Left cardiac atrium (tissue), 4 donors: ENCODE measurements at regions of chr11 and their contacts with region 1.

Region 1: GRCh38 chr11:65418711-65419459 is 3.7 kb upstream of the NEAT1 start:
- DNase-seq: peak; percentile 99
- ATAC-seq: peak; percentile 42 to 51

Region 2: DNA sequence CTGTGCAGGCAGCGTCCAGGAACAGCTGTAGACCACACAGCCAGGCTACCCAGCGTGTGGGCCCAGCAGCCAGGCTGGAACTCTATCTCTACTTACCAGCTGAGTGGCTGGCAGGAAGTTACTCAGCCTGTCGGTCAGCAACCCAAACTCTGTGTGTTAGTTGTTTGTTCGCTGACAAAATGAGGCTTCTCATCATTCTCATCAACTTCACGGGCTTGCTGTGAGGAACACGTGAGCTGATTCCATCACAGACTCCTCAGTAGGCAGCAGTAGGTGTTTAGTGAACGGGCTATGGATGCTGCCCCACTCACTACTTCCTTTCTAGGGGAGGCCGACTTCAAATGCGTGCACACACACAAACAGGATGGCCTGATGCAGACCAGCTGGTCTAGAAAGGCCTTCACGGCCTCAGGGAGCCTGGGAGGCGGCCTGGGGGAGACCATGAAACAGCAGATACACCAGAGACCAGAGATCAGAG is 249.7 kb before region 1 on chr11:
- intact Hi-C with region 1: no loop called
- DNase-seq: no peak
- ATAC-seq: no peak

Region 3: DNA sequence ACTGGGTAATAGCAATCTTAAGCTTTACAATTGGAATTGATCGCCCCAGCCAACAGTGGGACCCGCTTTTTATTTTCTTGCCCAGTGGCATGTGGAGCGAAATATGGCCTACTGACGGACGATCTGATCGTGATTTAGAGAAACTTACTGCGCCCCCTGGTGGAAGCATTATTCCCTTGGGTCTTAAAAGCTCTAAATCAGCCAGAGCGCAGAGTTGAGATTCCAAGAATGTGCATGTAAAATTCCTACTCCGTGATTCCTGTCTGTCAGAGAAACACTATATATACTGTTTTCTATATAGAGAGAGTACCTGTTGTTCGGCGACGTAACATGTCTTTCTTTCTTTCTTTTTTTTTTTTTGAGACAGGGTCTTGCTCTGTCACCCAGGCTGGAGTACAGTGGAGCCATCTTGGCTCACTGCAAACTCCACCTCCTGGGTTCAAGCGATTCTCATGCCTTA is 88.9 kb before region 1 on chr11:
- intact Hi-C with region 1: no loop called
- DNase-seq: peak; percentile 92
- ATAC-seq: peak in 1 of 2 donors; percentile 24

Region 4: GRCh38 chr11:65382033-65382807 is 36.7 kb before region 1 on chr11 and contains the start of gene SLC25A45:
- intact Hi-C with region 1: loop called in 1 of 2 experiments (anchors 5 kb)
- DNase-seq: peak; percentile 95
- ATAC-seq: peak; percentile 83 to 94
- total RNA-seq, gene SLC25A45: 4.1 to 7.2 TPM

Region 5: DNA sequence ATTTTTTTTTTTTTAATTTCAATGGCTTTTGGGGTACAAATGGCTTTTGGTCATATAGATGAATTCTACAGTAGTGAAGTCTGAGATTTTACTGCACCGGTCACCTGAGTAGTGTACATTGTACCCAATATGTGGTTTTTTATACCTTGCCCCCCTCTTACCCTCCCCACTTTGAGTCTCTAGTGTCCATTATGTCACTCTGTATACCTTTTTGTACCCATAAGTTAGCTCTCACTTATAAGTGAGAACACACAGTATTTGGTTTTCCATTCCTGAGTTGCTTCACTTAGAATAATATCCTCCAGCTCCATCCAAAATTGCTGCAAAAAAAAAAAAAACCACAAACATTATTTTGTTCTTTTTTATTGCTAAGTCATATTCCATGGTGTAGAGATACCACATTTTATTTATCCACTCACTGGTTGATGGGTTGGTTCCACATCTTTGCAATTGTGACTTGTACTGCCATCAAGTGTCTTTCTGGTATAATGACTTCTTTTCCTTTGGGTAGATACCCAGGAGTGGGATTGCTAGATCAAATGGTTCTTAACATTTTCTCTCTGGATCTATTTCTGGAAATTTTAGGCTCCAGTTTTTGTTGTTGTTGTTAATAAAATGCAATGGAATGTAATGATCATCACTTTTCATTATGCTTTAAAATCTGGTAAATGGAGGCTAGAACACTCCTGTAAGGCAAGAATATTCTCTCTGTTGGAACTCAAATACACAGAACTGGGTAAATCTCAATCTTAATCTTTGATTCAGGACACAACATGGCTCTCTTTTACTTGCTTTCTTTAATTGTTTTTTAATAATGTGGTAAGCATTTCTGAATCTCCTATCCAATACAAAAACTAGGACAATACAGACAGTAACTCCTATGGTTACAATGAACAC is 14.0 kb after region 1 on chr11:
- intact Hi-C with region 1: no loop called
- DNase-seq: no peak
- ATAC-seq: no peak

Region 6: DNA sequence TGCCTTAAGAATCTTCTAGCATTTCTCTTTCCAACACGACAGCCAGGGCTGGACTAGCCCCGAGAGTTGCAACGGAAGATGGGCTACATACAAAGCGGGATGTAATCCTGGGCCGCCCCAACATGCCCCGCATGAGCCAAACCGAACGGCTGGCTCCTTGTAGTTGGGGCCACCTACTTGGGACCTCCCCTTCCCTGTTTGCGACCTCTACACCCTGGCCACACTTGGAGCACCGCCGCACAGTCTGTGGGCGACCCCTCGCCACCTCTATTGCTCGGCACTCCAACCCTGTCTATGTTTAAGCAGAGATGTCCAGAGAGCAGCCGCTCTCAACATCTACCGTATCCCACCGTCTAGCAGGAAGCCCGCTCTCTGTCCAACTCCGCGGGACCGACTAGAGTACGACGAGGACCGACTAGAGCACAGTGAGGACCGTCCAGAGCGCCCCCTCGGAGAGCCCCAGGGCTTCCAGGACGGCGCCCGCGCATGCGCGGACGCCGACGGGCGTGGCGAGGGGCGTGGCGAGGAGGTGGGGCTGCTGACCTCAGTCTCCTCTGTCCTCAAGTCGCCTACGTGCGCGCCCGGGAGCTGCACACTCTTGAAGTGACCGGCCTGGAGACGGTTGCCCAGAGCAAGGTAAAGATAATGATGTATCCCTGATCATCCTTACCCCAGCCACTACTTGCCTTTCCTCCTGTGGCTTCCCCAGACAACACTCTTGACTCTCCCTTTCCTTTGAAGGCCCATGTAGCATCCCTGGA is 36.0 kb after region 1 on chr11:
- intact Hi-C with region 1: no loop called
- DNase-seq: peak; percentile 90
- ATAC-seq: peak; percentile 91 to 96

Region 7: DNA sequence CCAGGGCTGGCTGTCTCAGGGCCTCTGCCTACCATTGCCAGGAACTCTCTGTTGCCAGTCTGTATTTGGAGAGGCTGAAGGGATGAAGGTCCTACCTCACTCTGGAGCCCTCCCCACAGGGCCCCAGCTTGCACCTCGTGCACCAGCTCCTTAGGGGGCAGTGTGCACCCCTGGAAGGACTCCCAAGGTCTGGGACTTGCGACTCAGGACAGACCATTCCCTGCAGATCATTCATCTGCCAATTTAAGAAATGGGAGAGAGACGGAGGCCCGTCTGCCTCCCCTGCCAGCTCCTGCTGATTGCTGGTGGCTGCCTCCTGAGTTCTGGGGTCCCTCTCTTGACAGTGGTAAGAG is 52.5 kb after region 1 on chr11:
- intact Hi-C with region 1: loop called in 1 of 2 experiments (anchors 5 kb)
- DNase-seq: peak; percentile 76
- ATAC-seq: peak; percentile 84 to 87

Region 8: GRCh38 chr11:65497141-65498041 is 78.5 kb after region 1 on chr11:
- intact Hi-C with region 1: loop called in 1 of 2 experiments (anchors 2 kb)
- DNase-seq: peak; percentile 99
- ATAC-seq: peak; percentile 86 to 87

Region 9: GRCh38 chr11:65506770-65507505 is 88.1 kb after region 1 on chr11:
- intact Hi-C with region 1: loop called (anchors 2 to 5 kb)
- DNase-seq: peak; percentile 39
- ATAC-seq: peak; percentile 19 to 42